Activated CD8-positive, alpha-beta T cell treated with anti-CD3 and anti-CD28 coated beads for 36 hours (primary cell): ENCODE measurements at regions of chr4 and their contacts with region 1.

Region 1: DNA sequence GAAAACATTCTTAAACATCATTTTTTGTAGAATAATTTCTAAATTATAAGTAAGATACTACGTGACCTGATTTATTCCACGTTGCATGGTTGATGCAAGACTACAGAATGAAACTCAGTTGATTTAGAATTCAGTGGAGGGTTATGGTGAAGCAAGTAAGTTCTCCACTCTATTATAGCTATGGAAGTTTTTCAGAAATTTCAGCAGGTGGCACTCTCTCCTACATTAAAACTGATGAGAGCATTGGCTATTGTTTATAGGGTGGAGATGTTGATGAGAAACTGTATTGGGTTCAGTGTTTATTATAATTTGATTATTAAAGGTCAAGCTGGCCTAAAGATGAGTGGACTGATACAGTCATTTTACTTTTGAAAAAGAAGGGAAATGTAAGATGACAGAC is 88.0 kb downstream of the FNIP2 start:
- DNase-seq: no peak
- ATAC-seq: peak; percentile 69
- H3K4me3 Mint-ChIP-seq: no peak overlapping the region
- H3K27ac Mint-ChIP-seq: no peak overlapping the region
- H3K4me1 Mint-ChIP-seq: peaks cover 2% of the 10 kb centered on the region
- H3K27me3 Mint-ChIP-seq: no peaks in the 10 kb centered on the region
- CTCF ChIP-seq: peak; percentile 47

Region 2: GRCh38 chr4:158609116-158609515 is 247.7 kb before region 1 on chr4:
- CTCF ChIA-PET with region 1: no interaction called
- POLR2A ChIA-PET with region 1: no interaction called
- intact Hi-C with region 1: no loop called
- DNase-seq: no peak
- ATAC-seq: no peak
- H3K4me3 Mint-ChIP-seq: no peak overlapping the region
- H3K27ac Mint-ChIP-seq: no peak overlapping the region
- H3K4me1 Mint-ChIP-seq: no peaks in the 10 kb centered on the region
- H3K27me3 Mint-ChIP-seq: peaks cover 4% of the 10 kb centered on the region
- CTCF ChIP-seq: no peak

Region 3: DNA sequence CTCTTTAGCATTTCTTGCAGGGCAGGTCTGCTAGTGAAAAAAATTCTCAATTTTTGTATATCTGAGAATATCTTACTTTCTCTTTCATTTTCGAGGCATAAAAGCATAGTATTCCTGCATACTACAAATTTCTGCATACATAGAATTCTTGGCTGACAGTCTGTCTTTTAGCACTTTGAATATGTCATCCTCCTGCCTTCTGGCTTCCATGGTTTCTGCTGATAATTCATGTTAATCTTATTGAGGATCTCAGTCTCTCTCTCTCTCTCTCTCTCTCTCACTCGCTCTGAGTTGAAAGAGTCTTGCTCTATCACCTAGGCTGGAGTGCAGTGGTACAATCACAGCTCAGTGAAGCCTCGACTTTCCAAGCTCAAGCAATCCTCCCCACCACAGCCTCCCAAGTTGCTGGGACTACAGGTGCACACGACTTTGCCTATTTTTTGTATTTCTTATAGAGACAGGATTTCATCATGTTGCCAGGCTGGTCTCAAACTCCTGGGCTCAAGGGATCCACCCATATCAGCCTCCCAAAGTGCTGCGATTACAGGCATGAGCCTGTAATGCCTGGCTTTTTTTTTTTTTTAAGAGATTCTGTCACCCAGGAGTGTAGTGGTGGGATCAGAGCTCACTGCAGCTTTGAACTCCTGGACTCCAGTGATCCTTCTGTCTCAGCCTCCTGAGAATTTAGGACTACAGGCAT is 73.2 kb after region 1 on chr4:
- CTCF ChIA-PET with region 1: no interaction called
- POLR2A ChIA-PET with region 1: no interaction called
- intact Hi-C with region 1: no loop called
- DNase-seq: no peak
- ATAC-seq: no peak
- H3K4me3 Mint-ChIP-seq: peak overlapping the region; percentile 15
- H3K27ac Mint-ChIP-seq: no peak overlapping the region
- H3K4me1 Mint-ChIP-seq: peaks cover 7% of the 10 kb centered on the region
- H3K27me3 Mint-ChIP-seq: no peaks in the 10 kb centered on the region
- CTCF ChIP-seq: no peak

Region 4: DNA sequence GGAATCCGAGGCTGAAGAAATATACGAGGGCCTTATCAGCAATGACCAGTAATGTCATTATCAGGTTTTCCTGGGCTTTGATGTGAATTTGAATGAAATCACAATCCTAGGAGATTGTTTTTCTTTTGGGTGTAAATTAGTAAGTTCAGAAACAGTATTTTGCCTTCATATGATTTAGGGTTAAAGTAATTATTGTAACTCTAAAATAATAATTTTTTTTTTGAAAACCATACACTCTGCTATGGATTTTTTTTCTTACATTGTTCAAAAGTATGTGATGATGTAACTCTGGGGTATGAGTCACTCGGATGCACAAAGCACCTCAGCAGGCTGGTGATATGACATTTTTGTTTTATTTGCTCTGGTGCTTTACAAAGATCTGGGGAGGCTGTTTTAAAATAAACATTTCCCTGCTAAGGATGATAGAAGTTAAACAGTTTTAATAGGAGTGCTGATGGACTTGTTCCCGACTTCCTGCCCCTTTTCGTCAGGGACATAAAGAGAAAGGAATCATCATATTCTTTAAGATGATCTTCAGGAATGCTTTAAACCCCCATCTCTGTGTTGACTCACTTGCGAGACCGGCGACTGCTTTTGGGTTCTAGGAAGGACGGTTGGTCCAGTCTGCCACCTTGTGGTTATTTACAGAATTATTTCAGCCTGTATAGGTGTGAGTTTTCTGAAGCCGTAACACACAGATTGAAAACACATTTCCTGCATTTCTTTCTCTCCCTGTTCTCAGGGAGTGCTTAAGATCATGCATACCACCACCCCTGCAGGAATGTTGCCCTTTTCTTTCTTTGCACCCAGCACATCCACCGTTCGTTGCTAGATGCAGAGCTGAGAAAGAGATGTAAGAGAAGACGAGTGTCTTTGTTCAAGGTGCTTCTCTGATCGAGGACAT is 318.5 kb after region 1 on chr4:
- CTCF ChIA-PET with region 1: interaction called, 10 read pairs
- POLR2A ChIA-PET with region 1: interaction called, 3 read pairs
- intact Hi-C with region 1: loop called (anchors 1 kb)
- DNase-seq: peak; percentile 74
- ATAC-seq: peak; percentile 94
- H3K4me3 Mint-ChIP-seq: peak overlapping the region; percentile 49
- H3K27ac Mint-ChIP-seq: no peak overlapping the region
- H3K4me1 Mint-ChIP-seq: peaks cover 63% of the 10 kb centered on the region
- H3K27me3 Mint-ChIP-seq: no peaks in the 10 kb centered on the region
- CTCF ChIP-seq: peak; percentile 82

Region 5: GRCh38 chr4:159201168-159201567 is 344.3 kb after region 1 on chr4:
- CTCF ChIA-PET with region 1: interaction called, 36 read pairs
- POLR2A ChIA-PET with region 1: no interaction called
- intact Hi-C with region 1: loop called (anchors 2 kb)
- DNase-seq: no peak
- ATAC-seq: no peak
- H3K4me3 Mint-ChIP-seq: no peak overlapping the region
- H3K27ac Mint-ChIP-seq: no peak overlapping the region
- H3K4me1 Mint-ChIP-seq: peaks cover 27% of the 10 kb centered on the region
- H3K27me3 Mint-ChIP-seq: no peaks in the 10 kb centered on the region
- CTCF ChIP-seq: no peak

Region 6: GRCh38 chr4:159206427-159206871 is 349.6 kb after region 1 on chr4:
- CTCF ChIA-PET with region 1: interaction called, 36 read pairs
- POLR2A ChIA-PET with region 1: no interaction called
- intact Hi-C with region 1: loop called (anchors 2 kb)
- DNase-seq: peak; percentile 71
- ATAC-seq: peak; percentile 86
- H3K4me3 Mint-ChIP-seq: peak overlapping the region; percentile 53
- H3K27ac Mint-ChIP-seq: peak overlapping the region; percentile 72
- H3K4me1 Mint-ChIP-seq: peaks cover 51% of the 10 kb centered on the region
- H3K27me3 Mint-ChIP-seq: no peaks in the 10 kb centered on the region
- CTCF ChIP-seq: no peak